ENCODE measurements at regions of chr2 and their contacts with region 1.

Region 1: DNA sequence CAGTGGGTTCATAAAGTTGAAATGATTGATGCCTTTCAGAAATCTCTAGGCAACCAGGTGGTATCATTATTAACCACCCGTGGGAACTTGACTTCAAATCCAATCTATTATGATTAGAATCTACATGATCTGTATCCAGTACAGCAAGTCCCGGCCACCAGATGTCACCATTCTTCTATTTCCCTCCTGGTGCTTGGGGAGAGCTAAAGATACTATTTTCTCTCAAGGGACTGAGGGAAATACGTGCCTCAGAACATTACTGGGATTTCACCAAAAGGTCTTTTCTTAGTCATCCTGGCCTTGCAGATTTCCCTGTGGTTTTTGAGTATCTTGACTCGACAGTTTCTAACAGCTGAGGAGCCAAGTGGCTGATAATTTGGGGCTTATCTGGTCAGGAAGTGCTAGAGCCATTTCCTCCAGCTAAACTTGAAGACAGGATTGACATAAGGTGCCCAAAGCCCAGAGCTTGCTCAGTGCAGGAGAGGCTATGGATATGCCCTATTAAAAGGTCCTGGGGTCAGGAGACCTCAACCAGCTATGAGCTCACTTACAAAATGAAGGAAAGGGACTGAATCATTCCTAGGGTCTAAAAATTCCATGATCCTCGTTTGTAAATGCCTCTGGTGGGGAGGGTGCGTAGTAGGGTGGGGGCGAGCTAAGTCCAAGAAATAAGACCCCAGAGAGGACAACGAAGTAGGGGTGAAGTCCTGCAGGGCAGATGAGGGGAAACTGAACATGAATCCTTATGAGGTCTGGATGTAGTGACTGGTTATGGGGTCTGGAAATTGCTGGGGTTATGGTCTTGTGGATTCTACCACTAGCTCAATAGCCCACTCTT is 135.4 kb upstream of the MGAT5 start:
- DNase-seq: peak; percentile 69
- H3K4me3 Mint-ChIP-seq: peak overlapping the region; percentile 99
- H3K27ac Mint-ChIP-seq: peak overlapping the region; percentile 16
- H3K4me1 Mint-ChIP-seq: peaks cover 28% of the 10 kb centered on the region
- H3K27me3 Mint-ChIP-seq: peaks cover 29% of the 10 kb centered on the region

Region 2: DNA sequence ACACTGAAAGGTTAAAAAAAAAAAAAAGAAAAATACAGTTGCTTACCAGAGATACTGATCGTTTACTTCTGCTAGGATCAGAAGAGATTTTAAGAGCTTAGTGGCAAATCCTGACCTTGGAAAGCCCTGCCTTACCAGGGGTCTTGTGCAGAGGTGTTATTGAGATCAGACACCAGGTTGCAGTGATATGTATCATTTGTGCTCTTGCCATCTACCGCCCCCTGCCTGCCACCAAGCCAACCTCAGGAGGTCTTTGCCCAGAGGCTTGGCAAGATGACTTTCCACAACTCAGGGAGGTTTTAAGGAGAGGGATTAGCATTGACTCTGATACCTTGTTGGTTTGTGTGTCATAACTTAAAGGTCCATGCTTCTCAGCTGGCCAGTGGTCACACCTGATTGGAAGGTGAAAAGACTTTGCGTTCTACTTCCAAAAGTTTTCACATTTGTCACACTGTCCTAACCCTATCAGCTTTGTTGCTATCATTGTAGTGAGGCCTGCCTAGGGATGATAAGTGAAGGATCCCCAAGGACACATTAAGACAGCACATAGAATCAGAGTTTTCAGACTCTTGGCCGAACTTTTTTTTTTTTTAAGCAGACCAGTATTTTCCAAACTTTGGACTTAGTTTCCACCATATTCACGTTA is 89.2 kb after region 1 on chr2:
- intact Hi-C with region 1: loop called (anchors 5 kb)
- DNase-seq: peak; percentile 16
- H3K4me3 Mint-ChIP-seq: no peak overlapping the region
- H3K27ac Mint-ChIP-seq: no peak overlapping the region
- H3K4me1 Mint-ChIP-seq: no peaks in the 10 kb centered on the region
- H3K27me3 Mint-ChIP-seq: peaks cover 3% of the 10 kb centered on the region

Region 3: GRCh38 chr2:134225866-134226265 is 107.4 kb after region 1 on chr2:
- intact Hi-C with region 1: no loop called
- DNase-seq: no peak
- H3K4me3 Mint-ChIP-seq: no peak overlapping the region
- H3K27ac Mint-ChIP-seq: no peak overlapping the region
- H3K4me1 Mint-ChIP-seq: peaks cover 22% of the 10 kb centered on the region
- H3K27me3 Mint-ChIP-seq: peaks cover 3% of the 10 kb centered on the region

Region 4: GRCh38 chr2:134253804-134254203 is 135.3 kb after region 1 on chr2 and contains the start of gene MGAT5:
- intact Hi-C with region 1: loop called (anchors 1 kb)
- DNase-seq: no peak
- H3K4me3 Mint-ChIP-seq: no peak within 1 kb of the TSS
- H3K27ac Mint-ChIP-seq: no peak within 1 kb of the TSS
- H3K4me1 Mint-ChIP-seq: peaks cover 63% of the 10 kb centered on the region
- H3K27me3 Mint-ChIP-seq: peaks cover 19% of the 10 kb centered on the region
- total RNA-seq, gene MGAT5: 25.8 and 26.2 TPM in 2 replicates

Region 5: DNA sequence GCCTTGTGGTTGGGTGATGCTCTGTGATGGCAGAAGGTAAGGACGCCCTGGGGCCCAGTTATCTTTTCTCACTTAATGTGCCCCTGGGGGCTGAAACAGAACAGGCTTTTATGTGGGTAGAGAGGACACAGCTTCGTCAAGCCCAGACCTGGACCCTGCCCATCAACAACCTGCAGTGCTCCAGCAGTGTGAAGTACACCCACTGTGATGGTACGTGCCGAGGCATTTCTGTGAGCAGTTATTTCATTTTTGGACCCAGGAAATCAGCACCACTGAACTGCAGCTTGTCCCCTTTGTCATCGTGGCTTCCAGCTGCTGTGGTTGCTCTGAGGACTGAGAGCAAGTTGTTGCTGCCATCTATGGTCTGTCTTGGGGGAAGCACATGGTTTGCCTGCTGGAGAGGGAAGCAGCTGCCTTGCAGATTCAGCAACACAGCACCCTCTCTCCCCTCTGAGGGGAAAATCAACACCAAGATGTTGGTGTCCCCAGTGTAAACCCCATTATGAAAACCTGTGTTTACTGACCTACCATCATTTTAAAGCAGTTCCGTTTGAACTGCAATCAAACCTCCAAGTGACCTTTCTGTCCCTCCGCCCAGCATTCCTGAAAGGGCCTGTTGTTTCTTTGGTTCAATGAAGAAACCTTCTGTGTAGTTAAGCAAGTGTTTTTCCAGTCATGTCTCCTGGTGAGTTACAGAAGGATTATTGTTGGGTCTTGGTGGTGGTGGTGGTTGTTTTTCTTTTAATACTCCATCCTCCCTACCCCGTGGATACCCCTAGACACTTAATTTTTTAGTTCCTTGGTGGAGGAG is 293.5 kb after region 1 on chr2:
- intact Hi-C with region 1: loop called (anchors 1 kb)
- DNase-seq: peak; percentile 62
- H3K4me3 Mint-ChIP-seq: no peak overlapping the region
- H3K27ac Mint-ChIP-seq: no peak overlapping the region
- H3K4me1 Mint-ChIP-seq: peaks cover 28% of the 10 kb centered on the region
- H3K27me3 Mint-ChIP-seq: no peaks in the 10 kb centered on the region

Region 6: GRCh38 chr2:134718817-134719814 is 600.6 kb after region 1 on chr2 and contains the start of gene TMEM163:
- intact Hi-C with region 1: loop called (anchors 5 kb)
- DNase-seq: no peak
- H3K4me3 Mint-ChIP-seq: peak within 1 kb of the TSS; percentile 81
- H3K27ac Mint-ChIP-seq: no peak within 1 kb of the TSS
- H3K4me1 Mint-ChIP-seq: peaks cover 11% of the 10 kb centered on the region
- H3K27me3 Mint-ChIP-seq: peaks cover 66% of the 10 kb centered on the region
- total RNA-seq, gene TMEM163: 0.12 and 0.21 TPM in 2 replicates

Region 7: DNA sequence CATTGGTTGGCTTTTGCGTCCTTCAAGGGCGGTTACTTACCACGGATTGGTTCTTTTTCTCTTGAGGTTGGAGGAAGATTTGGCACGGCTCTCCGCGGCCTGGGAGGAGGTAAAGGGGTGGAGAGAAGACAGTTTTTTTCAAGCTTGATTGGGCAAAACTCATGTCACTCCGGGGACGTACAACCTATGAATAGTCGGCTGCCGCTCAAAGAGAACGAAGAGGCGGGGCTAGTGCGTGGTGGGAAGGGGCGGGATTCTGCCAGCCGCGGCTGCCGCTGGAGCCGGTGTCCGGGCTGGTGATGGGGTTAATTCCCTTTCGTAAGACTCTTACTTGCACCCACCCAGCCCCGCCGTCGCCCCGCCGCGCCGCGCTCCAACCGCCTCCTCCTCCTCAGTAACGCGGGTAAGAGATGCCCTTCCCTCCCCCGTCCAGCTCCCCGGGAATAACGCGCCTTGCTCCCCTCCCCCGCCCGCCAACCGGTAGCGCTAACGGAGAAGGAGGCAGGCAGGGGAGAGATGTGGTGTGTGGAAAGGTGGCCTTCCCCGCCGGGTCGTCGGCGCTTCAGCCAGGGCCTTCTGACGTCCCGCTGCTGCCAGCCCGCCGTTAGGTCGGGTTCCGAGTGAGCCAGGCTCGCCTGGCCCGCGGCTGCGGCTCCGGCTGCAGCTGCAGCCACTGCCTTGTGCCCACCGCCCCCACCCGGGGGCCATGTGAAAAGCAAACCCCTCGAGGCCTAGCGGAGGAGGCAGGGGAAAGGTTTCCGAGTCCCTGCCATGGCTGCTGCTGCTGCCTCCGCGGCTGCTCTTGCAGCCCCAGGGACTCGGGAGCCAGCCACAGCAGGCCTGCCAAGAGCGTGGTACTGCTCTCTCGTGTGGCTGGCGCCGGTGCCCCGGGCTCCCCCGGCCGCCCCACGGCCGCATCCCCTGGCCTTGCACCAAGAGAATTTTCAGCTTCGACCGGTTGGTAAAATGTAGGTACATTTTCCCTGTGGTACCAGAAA is 1413.0 kb after region 1 on chr2 and contains the start of gene R3HDM1:
- intact Hi-C with region 1: loop called (anchors 5 kb)
- DNase-seq: peak; percentile 95
- H3K4me3 Mint-ChIP-seq: no peak within 1 kb of the TSS
- H3K27ac Mint-ChIP-seq: peak within 1 kb of the TSS; percentile 83
- H3K4me1 Mint-ChIP-seq: peaks cover 17% of the 10 kb centered on the region
- H3K27me3 Mint-ChIP-seq: no peaks in the 10 kb centered on the region
- total RNA-seq, gene R3HDM1: 63.0 and 64.0 TPM in 2 replicates

Measured in activated T-helper 1 cell treated with anti-CD3 and anti-CD28 coated beads, Interleukin-12 subunit alpha, Interleukin-12 subunit beta, Interleukin-2, Interleukin-4 antibody, amounts not matched to agents 30 ng/mL and 10 ng/mL and 1 ng/mL, durations not matched to agents 14 hours and 24 hours and 36 hours (primary cell).